Endothelial cell of umbilical vein (primary cell): ENCODE measurements at regions of chr2 and their contacts with region 1.

Region 1: GRCh38 chr2:199911052-199911876 is at the start of gene C2orf69:
- DNase-seq: peak; percentile 97
- H3K4me3 ChIP-seq: peak within 1 kb of the TSS; percentile 92 to 100 (median 100)
- H3K27ac ChIP-seq: peak within 1 kb of the TSS; percentile 86
- H3K4me1 ChIP-seq: peaks cover 30% of the 10 kb centered on the region
- H3K27me3 ChIP-seq: no peaks in the 10 kb centered on the region
- CTCF ChIP-seq: no peak
- POLR2A ChIP-seq: peak; percentile 93
- total RNA-seq, gene C2orf69: 11.4 and 12.9 TPM in 2 replicates

Region 2: DNA sequence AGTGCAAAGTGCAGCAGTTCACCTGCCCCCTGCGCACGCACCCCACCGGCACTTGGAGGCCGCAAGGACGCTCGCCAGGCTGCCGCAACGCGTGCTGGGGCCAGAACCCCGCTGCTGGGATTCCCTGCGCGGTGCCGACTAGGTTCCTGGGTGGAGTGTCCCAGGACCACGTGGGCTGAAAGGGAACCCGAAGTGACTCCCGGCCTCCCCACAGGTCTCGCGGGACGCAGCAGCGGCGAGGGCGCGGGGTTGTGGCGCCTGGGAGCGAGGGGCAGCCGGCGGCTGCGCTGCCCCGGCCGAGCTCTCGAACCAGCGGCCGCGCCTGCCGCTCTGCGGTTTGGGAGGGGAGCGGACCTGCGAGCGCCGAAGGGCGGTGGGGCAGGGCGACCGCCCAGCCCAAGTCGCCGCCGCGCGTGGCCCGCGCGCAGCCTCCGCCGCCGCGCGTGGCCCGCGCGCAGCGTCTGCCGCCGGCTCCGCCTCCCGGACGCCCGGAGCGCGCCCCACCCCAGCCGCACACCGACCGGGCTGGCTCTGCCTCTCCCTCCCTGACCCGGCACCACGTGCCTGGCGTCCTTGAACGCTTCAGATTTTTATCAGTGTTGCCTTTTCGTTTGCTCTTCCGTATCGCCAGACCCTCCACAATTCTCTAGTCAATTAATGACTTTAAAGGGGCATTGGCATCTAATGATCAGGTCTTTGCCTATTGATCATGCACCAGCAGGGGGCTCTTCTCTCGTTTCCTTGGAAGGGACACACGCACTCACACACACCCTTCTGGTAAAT is 60.4 kb before region 1 on chr2 and contains the start of gene FTCDNL1:
- CTCF ChIA-PET with region 1: no interaction called
- POLR2A ChIA-PET with region 1: no interaction called
- dilution Hi-C with region 1: no loop called
- intact Hi-C with region 1: loop called (anchors 1 kb)
- DNase-seq: peak; percentile 50
- H3K4me3 ChIP-seq: peak within 1 kb of the TSS; percentile 23 to 72 (median 64)
- H3K27ac ChIP-seq: no peak within 1 kb of the TSS
- H3K4me1 ChIP-seq: peaks cover 2% of the 10 kb centered on the region
- H3K27me3 ChIP-seq: peaks cover 7 to 26% of the 10 kb centered on the region in 2 experiments
- CTCF ChIP-seq: peak; percentile 61 to 64
- POLR2A ChIP-seq: no peak
- total RNA-seq, gene FTCDNL1: 0.27 and 0.65 TPM in 2 replicates

Region 3: GRCh38 chr2:199922856-199923255 is 11.6 kb after region 1 on chr2:
- CTCF ChIA-PET with region 1: interaction called, 3 read pairs
- POLR2A ChIA-PET with region 1: interaction called, 5 read pairs
- dilution Hi-C with region 1: no loop called
- intact Hi-C with region 1: loop called (anchors 1 kb)
- DNase-seq: no peak
- H3K4me3 ChIP-seq: no peak overlapping the region
- H3K27ac ChIP-seq: no peak overlapping the region
- H3K4me1 ChIP-seq: no peaks in the 10 kb centered on the region
- H3K27me3 ChIP-seq: no peaks in the 10 kb centered on the region
- CTCF ChIP-seq: no peak
- POLR2A ChIP-seq: no peak

Region 4: GRCh38 chr2:199955339-199956261 is 44.3 kb after region 1 on chr2 and contains the starts of genes MAIP1 and TYW5:
- CTCF ChIA-PET with region 1: no interaction called
- POLR2A ChIA-PET with region 1: no interaction called
- dilution Hi-C with region 1: no loop called
- intact Hi-C with region 1: loop called (anchors 1 kb)
- DNase-seq: peak; percentile 86
- H3K4me3 ChIP-seq: peak within 1 kb of the TSS; percentile 93 to 99 (median 99)
- H3K27ac ChIP-seq: peak within 1 kb of the TSS; percentile 73
- H3K4me1 ChIP-seq: peaks cover 18% of the 10 kb centered on the region
- H3K27me3 ChIP-seq: no peaks in the 10 kb centered on the region
- CTCF ChIP-seq: peak in 1 of 2 donors; percentile 40
- POLR2A ChIP-seq: peak; percentile 95
- total RNA-seq, gene MAIP1: 17.7 and 17.9 TPM in 2 replicates
- total RNA-seq, gene TYW5: 8.5 and 8.9 TPM in 2 replicates

Region 5: GRCh38 chr2:200306196-200306930 is 395.1 kb after region 1 on chr2 and contains the start of gene SPATS2L:
- CTCF ChIA-PET with region 1: no interaction called
- POLR2A ChIA-PET with region 1: no interaction called
- dilution Hi-C with region 1: no loop called
- intact Hi-C with region 1: loop called (anchors 2 kb)
- DNase-seq: peak; percentile 71
- H3K4me3 ChIP-seq: peak within 1 kb of the TSS; percentile 83 to 95 (median 93)
- H3K27ac ChIP-seq: peak within 1 kb of the TSS; percentile 39
- H3K4me1 ChIP-seq: peaks cover 14% of the 10 kb centered on the region
- H3K27me3 ChIP-seq: no peaks in the 10 kb centered on the region
- CTCF ChIP-seq: no peak
- POLR2A ChIP-seq: peak; percentile 74
- total RNA-seq, gene SPATS2L: 63.8 and 72.9 TPM in 2 replicates